Gastrocnemius medialis (tissue), 4 donors: ENCODE measurements at regions of chr12 and their contacts with region 1.

Region 1: GRCh38 chr12:66144791-66145754 is 14.5 kb upstream of the LLPH start:
- DNase-seq: peak; percentile 10 to 24
- ATAC-seq: peak; percentile 81 to 90
- H3K4me3 ChIP-seq: no peak overlapping the region
- H3K27ac ChIP-seq: peak overlapping the region; percentile 8 to 39 (median 28)
- H3K4me1 ChIP-seq: peaks cover 0 to 25% of the 10 kb centered on the region in 2 donors
- H3K27me3 ChIP-seq: no peaks in the 10 kb centered on the region
- CTCF ChIP-seq: peak; percentile 15 to 54 (median 44)
- POLR2A ChIP-seq: no peak

Region 2: GRCh38 chr12:66130277-66131066 is 14.6 kb before region 1 on chr12 and contains the start of gene LLPH:
- in situ Hi-C with region 1: no loop called
- intact Hi-C with region 1: no loop called
- DNase-seq: peak; percentile 67 to 82
- ATAC-seq: peak; percentile 94 to 97
- H3K4me3 ChIP-seq: peak within 1 kb of the TSS; percentile 73 to 89 (median 81)
- H3K27ac ChIP-seq: peak within 1 kb of the TSS; percentile 45 to 80 (median 74)
- H3K4me1 ChIP-seq: peaks cover 12 to 17% of the 10 kb centered on the region in 2 donors
- H3K27me3 ChIP-seq: no peaks in the 10 kb centered on the region
- CTCF ChIP-seq: no peak
- POLR2A ChIP-seq: peak; percentile 39 to 75
- total RNA-seq, gene LLPH: 9.5 to 21.4 (median 12.5) TPM

Region 3: DNA sequence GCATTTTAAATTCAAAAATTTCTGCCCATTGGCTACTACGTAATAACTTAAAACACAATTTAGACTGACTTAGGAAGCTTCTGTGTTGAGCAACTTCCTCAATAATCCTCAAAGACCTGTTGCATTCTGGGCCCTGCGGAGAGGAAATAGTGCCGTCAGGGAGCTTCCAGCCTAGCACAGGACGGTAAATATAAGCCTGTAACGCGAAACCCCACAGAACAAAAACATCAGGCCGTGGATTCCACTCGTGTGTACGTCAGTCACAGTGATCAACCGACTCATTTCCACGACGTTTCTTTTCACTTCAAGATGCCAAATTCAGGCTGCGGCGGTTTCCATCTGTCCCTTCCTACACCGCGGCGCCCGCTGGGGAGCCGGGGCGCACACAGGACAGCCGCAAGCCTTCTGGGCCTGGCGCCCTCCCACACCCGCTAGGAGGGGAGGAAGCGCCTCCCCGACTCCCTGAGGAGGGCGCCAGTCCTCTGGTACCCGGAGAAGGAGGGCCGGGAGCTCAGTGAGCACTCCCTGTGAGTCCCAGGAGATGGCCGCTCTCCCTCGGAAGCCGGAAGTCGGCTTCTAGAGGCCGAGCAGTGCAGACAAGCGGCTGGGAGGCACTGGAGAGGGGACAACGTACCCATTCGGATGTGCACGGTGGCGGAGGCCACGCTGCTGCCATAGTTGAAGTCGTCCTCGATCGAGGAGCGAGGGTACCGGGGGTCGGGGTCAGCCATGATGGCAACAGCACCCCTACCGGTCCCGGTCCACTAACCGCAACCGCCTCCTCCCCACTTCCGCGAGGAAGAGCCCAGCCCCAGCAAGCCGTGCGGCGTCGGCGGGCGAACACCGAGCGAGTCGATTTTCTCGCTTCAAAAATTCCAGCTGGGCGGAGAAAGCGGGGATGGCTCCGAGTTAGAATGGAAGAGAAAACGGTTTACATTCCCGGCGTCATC is 24.4 kb after region 1 on chr12 and contains the start of gene TMBIM4:
- in situ Hi-C with region 1: no loop called
- intact Hi-C with region 1: loop called (anchors 2 kb)
- DNase-seq: peak; percentile 77 to 78
- ATAC-seq: peak; percentile 93 to 95
- H3K4me3 ChIP-seq: peak within 1 kb of the TSS; percentile 82 to 98 (median 94)
- H3K27ac ChIP-seq: peak within 1 kb of the TSS; percentile 93 to 98 (median 94)
- H3K4me1 ChIP-seq: peaks cover 15 to 23% of the 10 kb centered on the region in 2 donors
- H3K27me3 ChIP-seq: no peaks in the 10 kb centered on the region
- CTCF ChIP-seq: peak; percentile 52 to 72 (median 60)
- POLR2A ChIP-seq: peak; percentile 49 to 54
- total RNA-seq, gene TMBIM4: 73.5 to 110 (median 80.9) TPM

Region 4: GRCh38 chr12:66235626-66236281 is 90.7 kb after region 1 on chr12:
- in situ Hi-C with region 1: no loop called
- intact Hi-C with region 1: loop called (anchors 10 kb)
- DNase-seq: no peak
- ATAC-seq: no peak
- H3K4me3 ChIP-seq: peak overlapping the region; percentile 21 to 61 (median 48)
- H3K27ac ChIP-seq: no peak overlapping the region
- H3K4me1 ChIP-seq: peaks cover 0 to 6% of the 10 kb centered on the region in 2 donors
- H3K27me3 ChIP-seq: peaks cover 0 to 3% (median 0%) of the 10 kb centered on the region in 3 donors
- CTCF ChIP-seq: no peak
- POLR2A ChIP-seq: no peak

Region 5: GRCh38 chr12:66417217-66417616 is 272.1 kb after region 1 on chr12:
- in situ Hi-C with region 1: loop called in 1 of 4 experiments (anchors 25 kb)
- intact Hi-C with region 1: loop called (anchors 10 kb)
- DNase-seq: no peak
- ATAC-seq: no peak
- H3K4me3 ChIP-seq: no peak overlapping the region
- H3K27ac ChIP-seq: no peak overlapping the region
- H3K4me1 ChIP-seq: no peaks in the 10 kb centered on the region
- H3K27me3 ChIP-seq: no peaks in the 10 kb centered on the region
- CTCF ChIP-seq: no peak
- POLR2A ChIP-seq: no peak

Region 6: DNA sequence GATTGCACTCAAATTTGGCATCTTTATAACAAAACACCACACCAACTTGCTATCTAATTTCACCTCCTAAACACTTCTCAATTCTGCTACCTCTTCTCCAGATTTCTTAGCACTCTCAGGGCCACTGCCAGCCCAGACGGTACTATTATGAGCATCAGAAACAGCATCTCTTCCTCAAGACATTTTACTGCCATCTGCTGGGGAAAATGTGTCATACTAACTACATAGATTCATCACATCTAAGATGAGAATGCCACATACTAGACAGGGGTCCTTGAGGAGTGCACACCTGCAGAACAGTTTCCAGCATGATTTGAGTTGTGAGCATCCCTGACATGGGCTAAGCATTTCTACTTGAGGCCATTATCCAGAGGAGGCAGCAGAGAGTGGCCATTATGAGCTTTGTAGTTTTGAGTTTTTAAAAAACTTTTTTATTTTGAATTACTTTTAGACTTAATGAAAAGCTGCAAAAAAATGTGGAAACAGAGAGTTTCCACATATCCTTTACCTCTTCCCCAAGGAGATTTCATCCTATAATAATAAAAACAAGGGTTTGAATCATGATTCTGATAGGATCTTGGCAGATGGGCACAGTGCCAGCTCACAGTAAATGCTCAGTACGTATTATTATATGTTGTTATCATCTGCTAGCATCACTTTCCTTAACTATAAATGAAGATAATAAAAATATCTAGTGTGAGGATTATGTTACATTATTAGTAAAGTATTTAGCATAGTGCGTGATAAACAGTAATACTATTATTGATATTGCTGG is 549.0 kb after region 1 on chr12:
- in situ Hi-C with region 1: no loop called
- intact Hi-C with region 1: loop called (anchors 5 kb)
- DNase-seq: no peak
- ATAC-seq: peak; percentile 49 to 74
- H3K4me3 ChIP-seq: no peak overlapping the region
- H3K27ac ChIP-seq: no peak overlapping the region
- H3K4me1 ChIP-seq: no peaks in the 10 kb centered on the region
- H3K27me3 ChIP-seq: no peaks in the 10 kb centered on the region
- CTCF ChIP-seq: peak in 3 of 5 experiments; percentile 26 to 45 (median 35)
- POLR2A ChIP-seq: no peak